Sigmoid colon (tissue), 7 donors: ENCODE measurements at regions of chr3 and their contacts with region 1.

Region 1: DNA sequence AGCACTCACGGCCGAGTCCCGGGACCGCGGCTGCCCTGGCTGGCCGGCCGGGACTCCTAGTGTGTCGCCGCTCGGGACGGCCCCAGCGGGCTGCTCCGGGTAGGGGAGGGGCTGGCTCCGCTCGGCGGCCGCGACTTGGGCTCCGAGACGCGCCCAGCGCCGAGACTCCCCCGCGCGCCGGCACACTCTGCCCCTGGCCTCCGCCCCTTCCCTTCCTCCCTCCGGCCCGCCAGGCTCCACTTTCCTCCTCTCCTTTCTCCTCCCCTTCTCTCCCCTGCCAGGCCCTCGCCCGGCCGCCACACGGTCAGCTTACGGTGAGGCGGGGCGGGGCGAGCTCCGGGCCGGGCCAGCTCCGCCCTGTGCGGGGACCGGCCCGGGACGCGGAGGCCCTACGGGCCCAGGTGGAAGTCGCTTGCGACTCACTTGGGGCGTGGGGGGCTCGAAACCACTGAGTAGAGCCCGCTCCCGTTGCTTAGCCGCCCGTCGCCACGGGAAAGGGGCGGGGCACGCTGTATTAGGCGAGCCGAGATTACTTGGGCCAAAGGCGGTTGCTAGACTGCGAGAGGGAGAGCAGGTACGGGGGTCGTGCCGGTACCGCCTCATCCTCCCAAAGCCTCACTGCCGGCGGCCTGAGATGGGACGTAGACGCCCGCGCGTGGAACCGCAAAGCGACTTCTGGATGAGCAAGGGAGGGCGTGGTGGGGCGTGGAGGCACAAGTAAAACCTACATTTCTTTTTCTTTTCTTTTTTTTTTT is at the start of gene ITGB5:
- DNase-seq: peak; percentile 93
- H3K4me3 ChIP-seq: peak within 1 kb of the TSS; percentile 70 to 94 (median 86)
- H3K27ac ChIP-seq: peak within 1 kb of the TSS; percentile 92 to 95 (median 93)
- H3K4me1 ChIP-seq: peaks cover 0 to 43% (median 33%) of the 10 kb centered on the region in 4 donors
- H3K27me3 ChIP-seq: no peaks in the 10 kb centered on the region
- CTCF ChIP-seq: no peak
- EP300 ChIP-seq: no peak
- POLR2A ChIP-seq: peak; percentile 52 to 65
- total RNA-seq, gene ITGB5: 89.2 to 203 (median 125) TPM

Region 2: DNA sequence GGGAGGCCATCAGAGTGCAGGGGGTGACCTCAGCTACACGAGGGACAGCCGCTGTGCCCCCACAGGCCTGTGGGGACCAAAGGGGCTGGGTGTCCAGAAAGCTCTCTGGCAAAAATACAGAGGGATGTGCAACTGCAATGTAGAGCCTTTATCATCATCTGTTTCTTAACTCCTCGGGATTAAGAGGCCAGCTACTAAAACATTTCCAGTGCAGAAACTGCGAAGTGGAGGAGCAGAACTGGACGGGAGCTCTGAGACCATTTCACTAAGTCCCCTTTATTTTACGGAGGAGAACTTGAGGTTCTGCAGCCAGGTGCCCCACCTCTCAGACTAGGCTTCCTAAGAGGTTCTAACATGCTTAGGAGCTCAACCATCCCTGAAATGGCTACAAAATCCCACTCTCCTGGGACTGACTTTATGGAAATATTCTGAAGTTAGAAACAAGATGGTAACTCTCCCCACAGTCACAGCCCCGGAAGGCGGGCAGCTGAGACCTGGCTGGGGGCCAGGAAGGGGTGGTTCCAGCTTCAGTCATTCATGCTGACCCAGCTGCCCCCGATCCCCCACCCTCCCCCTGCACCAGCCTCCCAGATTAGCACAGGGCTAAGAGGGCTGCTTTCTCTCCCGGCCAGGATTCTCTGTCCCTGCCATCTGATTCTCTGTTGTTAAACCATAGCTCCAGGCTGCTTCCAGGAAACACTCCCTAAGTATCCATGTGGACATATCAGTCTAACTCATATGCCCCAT is 116.8 kb before region 1 on chr3:
- intact Hi-C with region 1: loop called (anchors 2 kb)
- DNase-seq: no peak
- H3K4me3 ChIP-seq: no peak overlapping the region
- H3K27ac ChIP-seq: peak overlapping the region in 3 of 4 donors; percentile 75 to 89 (median 83)
- H3K4me1 ChIP-seq: peaks cover 0 to 62% (median 56%) of the 10 kb centered on the region in 4 donors
- H3K27me3 ChIP-seq: no peaks in the 10 kb centered on the region
- CTCF ChIP-seq: no peak
- EP300 ChIP-seq: no peak
- POLR2A ChIP-seq: no peak

Region 3: GRCh38 chr3:124845406-124845805 is 41.9 kb before region 1 on chr3:
- intact Hi-C with region 1: loop called (anchors 5 kb)
- DNase-seq: peak; percentile 86
- H3K4me3 ChIP-seq: no peak overlapping the region
- H3K27ac ChIP-seq: peak overlapping the region; percentile 81 to 91 (median 86)
- H3K4me1 ChIP-seq: peaks cover 0 to 56% (median 43%) of the 10 kb centered on the region in 4 donors
- H3K27me3 ChIP-seq: no peaks in the 10 kb centered on the region
- CTCF ChIP-seq: no peak
- EP300 ChIP-seq: no peak
- POLR2A ChIP-seq: no peak

Region 4: DNA sequence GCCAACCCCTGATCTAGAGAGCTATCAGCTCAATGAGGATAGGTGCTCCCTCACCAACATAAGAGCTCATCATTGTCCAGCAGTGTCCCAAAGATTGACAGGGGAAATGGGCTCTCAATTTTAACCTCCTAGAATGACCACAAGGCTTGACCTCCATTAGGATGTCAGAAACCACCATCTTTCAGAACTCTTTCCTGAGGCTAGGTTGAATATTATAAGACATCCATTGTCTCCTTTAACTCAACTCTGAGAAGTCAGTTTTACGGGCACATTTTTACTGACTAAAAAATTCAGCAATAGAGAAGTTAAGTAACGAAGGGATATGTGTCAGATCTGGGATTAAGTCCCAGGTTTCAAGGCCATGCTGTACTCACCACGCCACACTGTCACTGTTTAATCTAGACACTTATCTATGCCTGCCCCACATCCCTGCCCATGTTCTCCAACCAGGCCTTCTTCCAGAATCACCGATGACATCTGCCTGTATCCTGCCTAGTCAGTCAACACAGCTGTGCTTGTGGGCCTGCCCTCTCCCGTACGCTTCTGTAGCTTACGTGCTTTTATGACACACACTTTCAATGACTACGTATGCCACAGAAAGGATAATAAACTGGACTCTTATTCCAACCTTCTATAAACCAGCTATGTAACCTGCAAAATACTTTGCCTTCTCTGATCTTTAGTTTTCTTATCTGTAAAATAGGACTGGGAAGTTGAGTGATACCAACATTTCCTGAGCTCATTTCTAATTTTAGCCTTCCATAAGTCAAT is 64.3 kb after region 1 on chr3:
- intact Hi-C with region 1: no loop called
- DNase-seq: no peak
- H3K4me3 ChIP-seq: no peak overlapping the region
- H3K27ac ChIP-seq: no peak overlapping the region
- H3K4me1 ChIP-seq: no peaks in the 10 kb centered on the region
- H3K27me3 ChIP-seq: no peaks in the 10 kb centered on the region
- CTCF ChIP-seq: no peak
- EP300 ChIP-seq: no peak
- POLR2A ChIP-seq: no peak

Region 5: DNA sequence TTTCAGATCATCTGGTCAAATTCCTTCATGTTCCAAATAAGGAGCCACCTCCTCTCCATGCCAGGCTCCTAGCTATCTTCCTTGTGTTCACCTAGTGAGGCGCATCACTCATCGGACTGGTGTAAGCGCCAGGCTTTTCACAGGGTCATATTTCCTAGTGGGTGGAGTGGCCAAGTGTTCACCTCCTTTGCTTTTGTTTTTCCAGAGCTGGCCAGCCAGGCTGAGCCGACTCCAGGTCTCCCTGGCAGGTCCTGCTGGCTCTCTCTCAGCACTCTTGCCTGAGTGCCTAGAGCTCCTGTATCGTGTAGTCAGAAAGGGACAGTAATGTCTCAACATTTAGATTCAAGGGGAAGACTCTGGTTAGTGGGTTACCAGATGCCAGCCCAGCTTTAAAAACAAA is 137.5 kb after region 1 on chr3:
- intact Hi-C with region 1: no loop called
- DNase-seq: no peak
- H3K4me3 ChIP-seq: no peak overlapping the region
- H3K27ac ChIP-seq: peak overlapping the region; percentile 46 to 65 (median 60)
- H3K4me1 ChIP-seq: peaks cover 0 to 37% (median 27%) of the 10 kb centered on the region in 4 donors
- H3K27me3 ChIP-seq: no peaks in the 10 kb centered on the region
- CTCF ChIP-seq: no peak
- EP300 ChIP-seq: no peak
- POLR2A ChIP-seq: no peak